Activated T-helper 1 cell treated with anti-CD3 and anti-CD28 coated beads, Interleukin-12 subunit alpha, Interleukin-12 subunit beta, Interleukin-2, Interleukin-4 antibody, amounts not matched to agents 30 ng/mL and 10 ng/mL and 1 ng/mL, durations not matched to agents 14 hours and 24 hours and 36 hours (primary cell): ENCODE measurements at regions of chr6 and their contacts with region 1.

Region 1: DNA sequence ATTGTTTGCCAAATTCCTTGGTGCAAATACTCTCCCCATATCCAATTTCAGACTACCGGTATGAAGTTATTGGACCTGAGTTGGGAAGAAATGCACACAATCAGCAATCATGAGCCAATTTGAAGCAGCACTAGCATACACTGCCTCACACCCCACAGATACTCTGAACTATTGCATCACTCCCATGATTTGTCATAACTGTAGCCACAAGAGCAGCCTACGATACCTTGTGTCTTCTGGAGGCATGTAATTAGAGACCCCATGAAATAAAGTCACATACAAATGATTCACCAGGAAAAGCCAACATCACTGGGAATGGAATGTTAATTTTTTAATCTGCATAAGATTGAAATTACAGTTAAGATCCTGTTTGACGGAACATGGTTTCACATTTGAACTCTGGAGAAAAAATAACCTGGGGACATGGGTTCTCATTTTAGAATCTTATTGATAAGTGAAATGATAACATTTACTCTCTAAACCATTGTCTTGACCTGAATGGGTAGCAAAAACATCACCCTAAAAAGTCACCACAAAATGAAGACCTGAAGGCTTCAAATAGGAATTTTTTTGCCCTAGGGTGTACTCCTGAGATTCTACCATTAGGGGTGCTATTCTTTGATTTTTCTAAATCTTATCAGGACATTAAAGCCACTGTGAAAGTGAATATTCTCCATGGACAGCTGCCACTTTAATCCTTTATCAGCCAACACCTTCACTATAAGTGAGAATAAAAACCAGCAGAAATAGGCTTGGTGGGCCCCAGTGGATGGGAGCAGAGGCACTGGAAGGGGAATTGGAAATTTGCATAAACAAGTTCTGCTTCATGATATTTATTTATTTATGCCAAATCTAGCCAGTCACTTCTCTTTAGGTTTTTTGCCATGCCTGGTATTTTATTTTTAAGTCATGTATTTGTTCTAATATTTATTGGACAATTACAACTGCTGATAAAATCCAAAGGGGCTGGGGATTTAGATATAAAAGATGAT is 34.5 kb upstream of the HBS1L start:
- DNase-seq: peak; percentile 58
- H3K4me3 Mint-ChIP-seq: peak overlapping the region; percentile 57
- H3K27ac Mint-ChIP-seq: peak overlapping the region; percentile 93
- H3K4me1 Mint-ChIP-seq: peaks cover 89% of the 10 kb centered on the region
- H3K27me3 Mint-ChIP-seq: no peaks in the 10 kb centered on the region

Region 2: DNA sequence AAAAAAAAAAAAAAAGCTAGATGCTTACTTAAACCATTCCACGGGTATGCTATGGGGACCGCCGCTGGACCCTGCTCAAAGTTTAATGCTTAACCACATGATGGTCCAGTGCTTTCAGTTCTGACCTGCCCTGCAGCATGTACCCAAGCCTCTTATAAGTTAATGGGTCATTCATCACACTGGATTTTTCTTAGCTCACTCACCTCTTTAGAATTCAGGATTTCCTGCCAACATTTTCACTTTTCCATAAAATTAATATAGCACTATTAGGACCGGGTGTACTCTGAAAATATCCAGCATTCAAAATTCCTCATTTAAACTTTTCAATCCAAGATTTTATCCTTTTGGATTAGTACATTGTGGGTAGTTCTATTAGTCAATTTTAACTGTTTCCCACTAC is 280.0 kb before region 1 on chr6:
- intact Hi-C with region 1: no loop called
- DNase-seq: no peak
- H3K4me3 Mint-ChIP-seq: no peak overlapping the region
- H3K27ac Mint-ChIP-seq: no peak overlapping the region
- H3K4me1 Mint-ChIP-seq: no peaks in the 10 kb centered on the region
- H3K27me3 Mint-ChIP-seq: peaks cover 19% of the 10 kb centered on the region

Region 3: DNA sequence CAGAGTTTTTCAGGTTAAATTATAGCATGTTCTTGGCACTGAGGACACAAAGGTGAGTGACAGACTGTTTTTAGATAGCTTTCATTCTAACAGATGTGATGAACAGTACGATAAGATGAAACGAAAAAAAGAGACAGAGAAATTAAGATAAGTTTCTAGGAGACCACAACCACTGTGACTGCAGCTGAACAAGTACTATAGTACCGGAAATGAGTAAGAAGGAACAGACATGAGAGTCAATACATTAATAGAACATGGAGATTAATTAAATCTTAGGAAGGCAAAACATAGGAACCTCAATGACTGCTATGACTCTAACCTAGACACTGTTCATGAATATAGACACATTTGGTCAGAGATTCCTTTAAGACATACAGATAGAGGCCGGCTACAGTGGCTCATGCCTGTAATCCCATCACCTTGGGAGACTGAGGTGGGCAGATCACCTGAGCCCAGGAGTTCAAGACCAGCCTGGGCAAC is 74.7 kb before region 1 on chr6:
- intact Hi-C with region 1: loop called (anchors 1 kb)
- DNase-seq: no peak
- H3K4me3 Mint-ChIP-seq: peak overlapping the region; percentile 54
- H3K27ac Mint-ChIP-seq: peak overlapping the region; percentile 92
- H3K4me1 Mint-ChIP-seq: peaks cover 57% of the 10 kb centered on the region
- H3K27me3 Mint-ChIP-seq: no peaks in the 10 kb centered on the region

Region 4: DNA sequence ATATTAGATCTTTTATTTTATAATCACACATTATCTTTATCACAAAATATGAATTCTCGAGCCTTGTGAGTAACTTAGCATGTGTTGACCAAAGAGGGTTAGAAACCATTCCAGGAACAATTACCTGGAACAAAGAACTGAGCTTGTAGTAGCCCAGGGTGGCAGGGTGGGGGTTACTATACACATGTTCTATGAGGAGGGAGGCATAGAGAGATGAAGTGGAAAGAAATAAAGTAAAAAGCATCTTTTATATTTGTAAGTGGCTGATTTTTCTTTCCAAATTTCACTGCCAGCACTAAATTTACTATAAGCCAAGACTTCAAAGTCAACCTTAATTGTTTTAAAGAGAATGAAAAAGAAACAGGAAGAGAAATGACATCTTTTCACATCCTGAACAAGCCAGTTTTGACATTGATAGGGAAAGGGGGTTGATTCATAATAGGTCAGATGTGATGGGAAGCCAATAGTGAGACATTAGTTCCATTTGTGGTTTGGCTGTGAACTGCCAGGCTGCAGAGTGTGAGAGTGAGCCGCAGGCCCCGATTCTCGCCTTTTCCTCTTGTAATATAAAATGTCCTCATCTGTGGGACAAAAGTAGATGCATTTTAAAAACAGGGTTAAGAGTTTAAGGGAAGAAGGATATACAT is 39.3 kb after region 1 on chr6:
- intact Hi-C with region 1: loop called (anchors 1 kb)
- DNase-seq: peak; percentile 53
- H3K4me3 Mint-ChIP-seq: peak overlapping the region; percentile 66
- H3K27ac Mint-ChIP-seq: peak overlapping the region; percentile 97
- H3K4me1 Mint-ChIP-seq: peaks cover 63% of the 10 kb centered on the region
- H3K27me3 Mint-ChIP-seq: no peaks in the 10 kb centered on the region

Region 5: GRCh38 chr6:135438907-135439535 is 349.9 kb after region 1 on chr6:
- intact Hi-C with region 1: loop called (anchors 2 kb)
- DNase-seq: no peak
- H3K4me3 Mint-ChIP-seq: peak overlapping the region; percentile 43
- H3K27ac Mint-ChIP-seq: peak overlapping the region; percentile 67
- H3K4me1 Mint-ChIP-seq: peaks cover 27% of the 10 kb centered on the region
- H3K27me3 Mint-ChIP-seq: no peaks in the 10 kb centered on the region